T-cell (primary cell): ENCODE measurements at regions of chr7 and their contacts with region 1.

Region 1: GRCh38 chr7:129252128-129252527 is 27.3 kb downstream of the AHCYL2 start:
- DNase-seq: no peak
- ATAC-seq: no peak
- H3K4me3 ChIP-seq: no peak overlapping the region
- H3K4me3 Mint-ChIP-seq: no peak overlapping the region
- H3K27ac ChIP-seq: no peak overlapping the region
- H3K27ac Mint-ChIP-seq: no peak overlapping the region
- H3K4me1 ChIP-seq: no peaks in the 10 kb centered on the region
- H3K4me1 Mint-ChIP-seq: peaks cover 17 to 24% (median 18%) of the 10 kb centered on the region in 3 donors
- H3K27me3 ChIP-seq: no peaks in the 10 kb centered on the region
- H3K27me3 Mint-ChIP-seq: no peaks in the 10 kb centered on the region

Region 2: GRCh38 chr7:129238546-129238945 is 13.6 kb before region 1 on chr7:
- CTCF ChIA-PET with region 1: interaction called in 1 of 2 experiments, 3 read pairs
- POLR2A ChIA-PET with region 1: interaction called in 1 of 2 experiments, 10 read pairs
- DNase-seq: no peak
- ATAC-seq: no peak
- H3K4me3 ChIP-seq: no peak overlapping the region
- H3K4me3 Mint-ChIP-seq: no peak overlapping the region
- H3K27ac ChIP-seq: no peak overlapping the region
- H3K27ac Mint-ChIP-seq: no peak overlapping the region
- H3K4me1 ChIP-seq: no peaks in the 10 kb centered on the region
- H3K4me1 Mint-ChIP-seq: peaks cover 12 to 30% (median 22%) of the 10 kb centered on the region in 3 donors
- H3K27me3 ChIP-seq: no peaks in the 10 kb centered on the region
- H3K27me3 Mint-ChIP-seq: no peaks in the 10 kb centered on the region